T-cell (primary cell): ENCODE measurements at regions of chr2 and their contacts with region 1.

Region 1: GRCh38 chr2:43361286-43361685 is 134.9 kb upstream of the ZFP36L2 start:
- DNase-seq: no peak
- ATAC-seq: no peak
- H3K4me3 ChIP-seq: no peak overlapping the region
- H3K4me3 Mint-ChIP-seq: no peak overlapping the region
- H3K27ac ChIP-seq: no peak overlapping the region
- H3K27ac Mint-ChIP-seq: no peak overlapping the region
- H3K4me1 ChIP-seq: no peaks in the 10 kb centered on the region
- H3K4me1 Mint-ChIP-seq: peaks cover 2 to 8% (median 2%) of the 10 kb centered on the region in 3 donors
- H3K27me3 ChIP-seq: no peaks in the 10 kb centered on the region
- H3K27me3 Mint-ChIP-seq: no peaks in the 10 kb centered on the region

Region 2: DNA sequence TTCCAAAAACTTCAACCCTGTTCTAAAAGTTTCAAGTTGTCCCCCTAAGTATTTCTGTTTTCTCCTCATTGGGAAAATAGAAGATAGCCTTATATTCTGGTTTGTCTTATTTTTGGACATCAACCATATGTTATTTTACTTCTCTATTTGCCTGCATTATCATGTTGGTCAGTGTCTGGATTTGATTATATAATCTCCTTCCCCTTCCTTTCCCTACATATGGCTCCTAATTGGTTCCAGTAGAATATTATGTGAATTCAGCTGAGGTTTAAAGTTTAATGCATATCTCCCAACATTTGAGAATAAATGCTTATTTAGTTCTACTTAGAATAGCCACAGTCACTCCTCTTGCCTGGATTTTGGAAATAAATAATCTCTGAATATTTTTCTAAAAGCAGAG is 664.3 kb before region 1 on chr2:
- CTCF ChIA-PET with region 1: no interaction called
- POLR2A ChIA-PET with region 1: interaction called in 1 of 2 experiments, 13 read pairs
- DNase-seq: no peak
- ATAC-seq: no peak
- H3K4me3 ChIP-seq: no peak overlapping the region
- H3K4me3 Mint-ChIP-seq: no peak overlapping the region
- H3K27ac ChIP-seq: no peak overlapping the region
- H3K27ac Mint-ChIP-seq: no peak overlapping the region
- H3K4me1 ChIP-seq: peaks cover 0 to 5% of the 10 kb centered on the region in 2 experiments
- H3K4me1 Mint-ChIP-seq: peaks cover 6 to 9% (median 8%) of the 10 kb centered on the region in 3 donors
- H3K27me3 ChIP-seq: no peaks in the 10 kb centered on the region
- H3K27me3 Mint-ChIP-seq: no peaks in the 10 kb centered on the region

Region 3: GRCh38 chr2:43376523-43377198 is 15.4 kb after region 1 on chr2:
- CTCF ChIA-PET with region 1: no interaction called
- POLR2A ChIA-PET with region 1: no interaction called
- DNase-seq: no peak
- ATAC-seq: no peak
- H3K4me3 ChIP-seq: no peak overlapping the region
- H3K4me3 Mint-ChIP-seq: no peak overlapping the region
- H3K27ac ChIP-seq: no peak overlapping the region
- H3K27ac Mint-ChIP-seq: no peak overlapping the region
- H3K4me1 ChIP-seq: no peaks in the 10 kb centered on the region
- H3K4me1 Mint-ChIP-seq: peaks cover 0 to 25% (median 2%) of the 10 kb centered on the region in 3 donors
- H3K27me3 ChIP-seq: no peaks in the 10 kb centered on the region
- H3K27me3 Mint-ChIP-seq: no peaks in the 10 kb centered on the region

Region 4: GRCh38 chr2:44086629-44087028 is 725.3 kb after region 1 on chr2:
- CTCF ChIA-PET with region 1: no interaction called
- POLR2A ChIA-PET with region 1: no interaction called
- DNase-seq: no peak
- ATAC-seq: no peak
- H3K4me3 ChIP-seq: no peak overlapping the region
- H3K4me3 Mint-ChIP-seq: peak overlapping the region in 1 of 3 donors; percentile 42
- H3K27ac ChIP-seq: no peak overlapping the region
- H3K27ac Mint-ChIP-seq: no peak overlapping the region
- H3K4me1 ChIP-seq: peaks cover 0 to 14% of the 10 kb centered on the region in 2 experiments
- H3K4me1 Mint-ChIP-seq: peaks cover 11 to 24% (median 14%) of the 10 kb centered on the region in 3 donors
- H3K27me3 ChIP-seq: peaks cover 0 to 7% of the 10 kb centered on the region in 2 experiments
- H3K27me3 Mint-ChIP-seq: no peaks in the 10 kb centered on the region